CD8-positive, alpha-beta T cell (primary cell): ENCODE measurements at regions of chr3 and their contacts with region 1.

Region 1: DNA sequence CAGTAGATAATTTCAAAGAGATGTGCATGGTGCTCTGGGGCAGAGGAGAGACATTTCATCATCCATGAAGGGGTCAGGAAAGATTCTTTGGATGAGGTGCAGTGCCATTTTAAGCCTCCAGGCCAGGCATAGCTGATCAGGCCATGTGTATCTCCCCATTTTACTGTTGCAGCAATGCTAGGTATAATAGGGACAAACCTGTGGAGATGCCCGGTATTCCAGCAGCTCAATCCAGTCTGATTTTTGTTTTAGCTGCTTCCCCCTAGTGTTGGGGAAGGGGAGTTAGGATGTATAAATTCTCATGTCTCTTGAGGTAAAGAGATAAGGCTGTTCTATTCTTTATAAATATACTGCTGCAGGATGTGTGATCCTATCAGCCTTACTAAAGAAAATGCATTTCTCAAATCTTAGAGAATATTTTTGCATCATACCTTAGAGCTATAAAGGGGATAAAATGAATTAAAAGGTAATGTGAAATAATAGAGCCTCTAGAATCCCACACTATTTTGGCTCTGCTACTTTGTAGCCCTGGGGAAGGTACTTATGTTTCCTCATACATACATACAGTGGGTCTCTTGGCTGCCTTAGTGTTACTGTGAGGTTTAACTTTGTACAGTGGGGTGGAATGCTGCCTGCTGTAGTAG is 5.2 kb downstream of the CDV3 start:
- DNase-seq: peak in 2 of 9 experiments; percentile 18 to 40
- ATAC-seq: no peak
- H3K4me3 ChIP-seq: peak overlapping the region in 1 of 2 experiments; percentile 15
- H3K4me3 Mint-ChIP-seq: peak overlapping the region; percentile 75
- H3K27ac ChIP-seq: no peak overlapping the region
- H3K27ac Mint-ChIP-seq: peak overlapping the region; percentile 81
- H3K4me1 ChIP-seq: peaks cover 63% of the 10 kb centered on the region
- H3K4me1 Mint-ChIP-seq: peaks cover 82% of the 10 kb centered on the region
- H3K27me3 ChIP-seq: no peaks in the 10 kb centered on the region
- H3K27me3 Mint-ChIP-seq: no peaks in the 10 kb centered on the region
- CTCF ChIP-seq: peak; percentile 57

Region 2: GRCh38 chr3:133443649-133444422 is 134.8 kb before region 1 on chr3:
- CTCF ChIA-PET with region 1: interaction called, 3 read pairs
- POLR2A ChIA-PET with region 1: interaction called, 3 read pairs
- intact Hi-C with region 1: loop called (anchors 5 kb)
- DNase-seq: no peak
- ATAC-seq: no peak
- H3K4me3 ChIP-seq: no peak overlapping the region
- H3K4me3 Mint-ChIP-seq: no peak overlapping the region
- H3K27ac ChIP-seq: no peak overlapping the region
- H3K27ac Mint-ChIP-seq: peak overlapping the region; percentile 3
- H3K4me1 ChIP-seq: peaks cover 14% of the 10 kb centered on the region
- H3K4me1 Mint-ChIP-seq: peaks cover 33% of the 10 kb centered on the region
- H3K27me3 ChIP-seq: no peaks in the 10 kb centered on the region
- H3K27me3 Mint-ChIP-seq: no peaks in the 10 kb centered on the region
- CTCF ChIP-seq: no peak